ENCODE measurements at regions of chr2 and their contacts with region 1.

Region 1: GRCh38 chr2:145007093-145007959 is 487.4 kb upstream of the ZEB2 start:
- DNase-seq: peak; percentile 99
- H3K4me3 ChIP-seq: peak overlapping the region in 1 of 3 experiments; percentile 25
- H3K27ac ChIP-seq: peak overlapping the region; percentile 96
- H3K4me1 ChIP-seq: peaks cover 11% of the 10 kb centered on the region
- H3K27me3 ChIP-seq: no peaks in the 10 kb centered on the region
- CTCF ChIP-seq: peak in 1 of 2 donors; percentile 14

Region 2: DNA sequence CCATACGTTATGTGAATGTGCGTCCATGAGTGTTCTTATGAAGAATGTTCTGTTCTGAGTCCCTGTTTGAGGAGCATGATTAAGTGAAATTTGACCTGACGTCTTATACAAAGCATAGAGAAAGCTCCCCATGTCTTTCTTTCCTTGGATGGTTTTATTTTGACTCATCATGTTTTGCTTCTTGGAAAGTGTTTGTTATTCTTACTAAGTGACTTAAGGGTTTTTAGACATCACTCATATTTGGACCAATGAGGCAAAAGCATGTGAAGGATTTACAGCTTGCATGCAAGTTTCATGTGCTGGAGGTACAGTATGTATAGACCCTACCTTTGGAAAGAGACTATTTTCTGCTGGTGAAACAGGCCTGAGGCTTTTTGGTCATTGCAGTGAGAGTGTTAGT is 453.9 kb before region 1 on chr2:
- CTCF ChIA-PET with region 1: no interaction called
- dilution Hi-C with region 1: no loop called
- in situ Hi-C with region 1: no loop called
- intact Hi-C with region 1: no loop called
- DNase-seq: peak; percentile 82
- H3K4me3 ChIP-seq: no peak overlapping the region
- H3K27ac ChIP-seq: no peak overlapping the region
- H3K4me1 ChIP-seq: no peaks in the 10 kb centered on the region
- H3K27me3 ChIP-seq: no peaks in the 10 kb centered on the region
- CTCF ChIP-seq: no peak

Region 3: DNA sequence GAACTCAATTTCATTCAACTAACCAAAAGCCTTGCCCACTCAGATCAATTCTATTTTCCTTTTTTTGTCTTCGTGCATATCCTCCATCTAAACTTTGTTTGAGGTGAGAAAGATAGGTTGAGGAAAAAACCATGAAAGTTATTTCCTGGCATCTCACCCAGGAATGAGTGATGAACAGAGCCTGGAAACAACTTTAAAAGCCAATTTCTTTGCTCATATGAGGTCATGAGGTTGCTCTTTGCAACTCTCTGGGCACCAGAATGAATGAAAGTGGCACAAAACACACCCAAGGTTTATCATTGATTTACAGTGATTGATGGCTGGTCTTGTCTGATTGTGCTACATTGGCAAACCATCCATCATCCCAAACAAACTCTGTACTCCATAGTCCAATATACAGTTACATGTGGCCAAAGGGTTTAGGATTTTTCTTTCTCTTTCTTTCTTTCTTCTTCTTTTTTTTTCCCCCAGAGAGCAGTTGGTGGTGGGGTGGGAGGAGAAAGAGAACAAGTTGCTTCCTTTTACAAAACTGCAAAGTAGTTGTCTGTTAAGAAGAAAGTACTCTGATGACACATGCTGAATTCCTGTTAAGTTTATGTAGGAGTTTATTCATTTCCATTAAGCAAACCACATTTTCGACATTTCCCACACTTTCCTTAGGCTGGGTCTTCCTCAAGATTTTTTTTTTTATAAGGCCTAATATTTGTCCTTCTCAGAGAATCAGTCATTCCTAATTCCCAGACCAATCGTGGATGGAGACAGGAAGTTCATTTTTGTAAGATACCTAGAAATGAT is 88.5 kb after region 1 on chr2:
- CTCF ChIA-PET with region 1: no interaction called
- dilution Hi-C with region 1: no loop called
- in situ Hi-C with region 1: no loop called
- intact Hi-C with region 1: no loop called
- DNase-seq: peak; percentile 38
- H3K4me3 ChIP-seq: no peak overlapping the region
- H3K27ac ChIP-seq: no peak overlapping the region
- H3K4me1 ChIP-seq: peaks cover 18% of the 10 kb centered on the region
- H3K27me3 ChIP-seq: no peaks in the 10 kb centered on the region
- CTCF ChIP-seq: no peak

Region 4: GRCh38 chr2:145228506-145228905 is 221.2 kb after region 1 on chr2:
- CTCF ChIA-PET with region 1: interaction called, 14 read pairs
- dilution Hi-C with region 1: no loop called
- in situ Hi-C with region 1: no loop called
- intact Hi-C with region 1: no loop called
- DNase-seq: peak; percentile 2
- H3K4me3 ChIP-seq: no peak overlapping the region
- H3K27ac ChIP-seq: no peak overlapping the region
- H3K4me1 ChIP-seq: no peaks in the 10 kb centered on the region
- H3K27me3 ChIP-seq: no peaks in the 10 kb centered on the region
- CTCF ChIP-seq: no peak

Measured in mammary epithelial cell (primary cell).